Astrocyte of the cerebellum (primary cell): ENCODE measurements at regions of chr4 and their contacts with region 1.

Region 1: DNA sequence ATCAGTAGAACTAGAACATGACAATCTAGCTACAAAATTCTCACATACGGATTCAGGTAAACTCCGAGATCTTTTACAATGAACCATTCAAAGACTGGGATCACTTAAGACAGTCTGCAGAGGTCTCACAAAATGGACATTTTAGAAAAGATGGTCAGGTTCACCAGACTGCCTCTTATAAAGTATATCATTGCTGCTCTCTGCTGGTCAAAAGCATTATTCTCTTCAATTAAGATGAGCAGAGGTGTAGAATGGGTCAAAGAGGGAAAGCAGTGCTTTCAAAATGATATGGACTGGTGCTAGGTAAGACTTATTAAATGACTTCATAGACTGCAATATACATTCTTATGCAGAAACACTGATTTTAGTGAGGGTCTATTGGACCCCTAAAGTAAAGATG is 434.7 kb downstream of the PACRGL start:
- DNase-seq: peak; percentile 9
- H3K4me3 ChIP-seq: no peak overlapping the region
- CTCF ChIP-seq: no peak

Region 2: GRCh38 chr4:20773144-20773997 is 361.6 kb before region 1 on chr4:
- in situ Hi-C with region 1: loop called (anchors 25 kb)
- DNase-seq: peak; percentile 44
- H3K4me3 ChIP-seq: no peak overlapping the region
- CTCF ChIP-seq: peak; percentile 76